IMR-90 (cell line): ENCODE measurements at regions of chr7 and their contacts with region 1.

Region 1: DNA sequence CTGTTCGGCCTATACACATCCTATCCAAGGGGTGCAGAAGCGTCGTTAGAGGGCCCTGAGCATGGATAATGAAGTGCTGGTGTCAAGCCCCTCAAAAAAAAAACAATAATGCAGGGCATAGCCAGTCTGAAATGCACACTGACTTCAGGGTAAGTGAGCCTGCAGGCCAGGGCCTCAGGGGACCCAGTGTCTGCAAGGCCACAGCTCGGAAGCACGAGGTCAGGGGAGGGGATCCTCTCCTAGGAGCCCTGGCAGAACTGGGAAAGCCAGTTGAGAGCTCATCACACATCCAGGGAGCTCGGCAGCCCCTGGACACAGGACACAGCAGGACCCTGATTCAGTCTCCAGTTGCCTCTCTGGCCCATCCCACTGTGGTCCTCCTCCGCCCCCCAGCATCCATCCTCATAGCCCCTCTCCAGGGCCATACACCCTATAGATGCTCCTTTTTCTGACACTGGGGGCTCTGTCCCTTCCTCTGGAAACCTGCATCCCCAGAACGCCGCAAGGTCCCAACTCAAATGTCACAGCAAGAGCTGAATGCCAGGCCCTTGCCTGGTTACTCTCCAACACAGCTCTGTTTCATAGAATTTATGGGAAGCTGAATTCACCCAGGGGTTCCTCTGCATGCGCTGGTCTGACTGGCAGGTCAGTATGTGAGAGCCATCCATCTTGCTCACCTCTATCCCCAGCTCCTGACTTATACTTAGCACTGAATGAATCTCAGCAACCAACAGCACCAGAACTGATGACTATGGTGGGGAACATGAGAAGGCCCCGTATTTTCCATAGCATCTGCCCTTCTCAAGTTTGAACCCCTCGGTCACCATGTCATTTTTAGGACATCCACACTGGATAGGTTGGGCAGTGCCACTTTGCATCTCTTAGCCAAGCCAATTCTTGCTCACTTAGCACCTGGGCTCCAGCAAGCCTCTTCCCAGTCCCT is 717.0 kb upstream of the IGFBP3 start:
- DNase-seq: no peak
- ATAC-seq: no peak
- H3K4me3 ChIP-seq: no peak overlapping the region
- H3K27ac ChIP-seq: no peak overlapping the region
- H3K4me1 ChIP-seq: no peaks in the 10 kb centered on the region
- H3K27me3 ChIP-seq: no peaks in the 10 kb centered on the region
- CTCF ChIP-seq: no peak
- POLR2A ChIP-seq: no peak
- RAD21 ChIP-seq: no peak

Region 2: GRCh38 chr7:46682836-46683624 is 45.0 kb after region 1 on chr7:
- CTCF ChIA-PET with region 1: no interaction called
- POLR2A ChIA-PET with region 1: no interaction called
- dilution Hi-C with region 1: no loop called
- in situ Hi-C with region 1: no loop called
- intact Hi-C with region 1: loop called (anchors 5 kb)
- DNase-seq: peak; percentile 3
- ATAC-seq: no peak
- H3K4me3 ChIP-seq: no peak overlapping the region
- H3K27ac ChIP-seq: no peak overlapping the region
- H3K4me1 ChIP-seq: no peaks in the 10 kb centered on the region; the same call in 1 of the 2 replicates
- H3K27me3 ChIP-seq: no peaks in the 10 kb centered on the region
- CTCF ChIP-seq: no peak
- POLR2A ChIP-seq: no peak
- RAD21 ChIP-seq: no peak